ENCODE measurements at regions of chr19 and their contacts with region 1.

Region 1: DNA sequence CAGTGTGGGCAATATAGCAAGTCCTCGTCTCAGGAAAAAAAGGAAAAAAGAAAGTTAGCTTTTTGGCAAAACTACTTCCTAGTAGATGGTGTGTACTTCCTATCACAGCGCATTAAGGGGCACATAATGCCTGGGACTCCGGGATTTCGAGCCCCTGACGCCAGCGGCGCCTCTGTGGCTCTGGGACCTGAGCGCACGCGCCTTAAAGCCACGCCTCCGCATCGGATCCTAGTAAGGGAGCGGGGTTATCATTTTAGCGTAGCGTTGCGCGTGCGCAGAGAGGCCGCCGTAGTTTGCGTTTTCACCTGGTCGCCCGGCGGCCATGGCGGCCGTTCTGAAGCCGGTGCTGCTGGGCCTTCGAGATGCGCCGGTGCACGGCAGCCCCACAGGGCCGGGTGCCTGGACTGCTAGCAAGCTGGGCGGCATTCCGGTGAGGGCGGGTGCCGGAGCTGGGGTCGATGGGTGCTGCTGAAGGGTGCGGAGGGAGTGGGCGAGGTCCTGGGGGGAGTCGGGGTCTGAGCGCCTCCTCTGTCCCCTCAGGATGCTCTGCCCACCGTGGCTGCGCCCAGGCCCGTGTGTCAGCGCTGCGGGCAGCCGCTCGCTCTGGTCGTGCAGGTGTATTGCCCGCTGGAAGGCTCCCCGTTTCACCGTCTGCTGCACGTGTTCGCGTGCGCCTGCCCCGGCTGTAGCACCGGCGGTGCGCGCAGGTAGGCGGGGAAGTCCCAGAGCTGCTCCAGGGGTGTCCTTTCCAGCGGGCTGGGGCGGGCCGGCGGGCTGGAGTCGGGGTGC is at the start of gene PDCD2L:
- DNase-seq: peak; percentile 83 to 91 (median 89)
- ATAC-seq: peak; percentile 97
- H3K4me3 ChIP-seq: peak within 1 kb of the TSS; percentile 97
- H3K4me3 Mint-ChIP-seq: peak within 1 kb of the TSS; percentile 83 to 96 (median 92)
- H3K27ac ChIP-seq: peak within 1 kb of the TSS; percentile 81
- H3K27ac Mint-ChIP-seq: peak within 1 kb of the TSS; percentile 46 to 92 (median 88)
- H3K4me1 ChIP-seq: peaks cover 0 to 4% of the 10 kb centered on the region in 2 donors
- H3K4me1 Mint-ChIP-seq: peaks cover 9 to 42% (median 20%) of the 10 kb centered on the region in 7 donors
- H3K27me3 ChIP-seq: no peaks in the 10 kb centered on the region
- H3K27me3 Mint-ChIP-seq: no peaks in the 10 kb centered on the region
- total RNA-seq, gene PDCD2L: 4.9 to 14.5 (median 12.1) TPM

Region 2: DNA sequence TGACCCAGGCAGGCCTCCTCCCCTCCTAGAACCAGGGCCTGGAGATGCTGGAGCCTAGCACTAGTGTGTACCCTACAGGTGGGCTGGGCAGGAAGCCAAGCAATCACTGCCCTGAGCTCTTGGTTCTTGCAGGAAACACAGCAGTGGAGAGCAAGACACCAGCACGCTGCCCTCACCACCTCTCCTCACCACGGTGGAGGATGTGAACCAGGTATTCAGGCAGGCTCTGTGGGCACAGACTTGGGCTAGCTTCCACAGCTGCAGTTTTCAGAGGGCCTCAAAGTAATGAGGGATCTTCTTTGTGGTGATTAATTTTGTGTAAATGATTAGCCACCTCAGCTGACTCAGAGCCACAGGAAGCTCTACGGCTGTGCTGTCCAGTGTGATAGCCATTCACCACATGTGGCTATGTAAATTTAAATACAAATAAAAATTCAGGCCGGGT is 52.9 kb before region 1 on chr19:
- CTCF ChIA-PET with region 1: no interaction called
- POLR2A ChIA-PET with region 1: interaction called, 5 read pairs
- intact Hi-C with region 1: loop called (anchors 1 kb)
- DNase-seq: peak in 1 of 9 donors; percentile 16
- ATAC-seq: no peak
- H3K4me3 ChIP-seq: no peak overlapping the region
- H3K4me3 Mint-ChIP-seq: peak overlapping the region in 7 of 10 donors; percentile 12 to 75 (median 45)
- H3K27ac ChIP-seq: peak overlapping the region; percentile 43
- H3K27ac Mint-ChIP-seq: peak overlapping the region in 8 of 9 donors; percentile 76 to 91 (median 86)
- H3K4me1 ChIP-seq: peaks cover 18 to 25% of the 10 kb centered on the region in 2 donors
- H3K4me1 Mint-ChIP-seq: peaks cover 13 to 41% (median 26%) of the 10 kb centered on the region in 7 donors
- H3K27me3 ChIP-seq: no peaks in the 10 kb centered on the region
- H3K27me3 Mint-ChIP-seq: no peaks in the 10 kb centered on the region

Region 3: GRCh38 chr19:34359140-34359953 is 45.0 kb before region 1 on chr19:
- CTCF ChIA-PET with region 1: no interaction called
- POLR2A ChIA-PET with region 1: no interaction called
- intact Hi-C with region 1: loop called in 1 of 2 experiments (anchors 1 kb)
- DNase-seq: peak; percentile 77 to 99 (median 89)
- ATAC-seq: peak; percentile 95
- H3K4me3 ChIP-seq: peak overlapping the region; percentile 55
- H3K4me3 Mint-ChIP-seq: peak overlapping the region; percentile 80 to 93 (median 90)
- H3K27ac ChIP-seq: peak overlapping the region; percentile 66
- H3K27ac Mint-ChIP-seq: peak overlapping the region; percentile 87 to 95 (median 94)
- H3K4me1 ChIP-seq: peaks cover 11 to 15% of the 10 kb centered on the region in 2 donors
- H3K4me1 Mint-ChIP-seq: peaks cover 18 to 62% (median 27%) of the 10 kb centered on the region in 7 donors
- H3K27me3 ChIP-seq: no peaks in the 10 kb centered on the region
- H3K27me3 Mint-ChIP-seq: no peaks in the 10 kb centered on the region

Region 4: GRCh38 chr19:34364830-34365462 is 39.4 kb before region 1 on chr19 and contains the start of gene GPI:
- CTCF ChIA-PET with region 1: no interaction called
- POLR2A ChIA-PET with region 1: interaction called, 8 read pairs
- intact Hi-C with region 1: loop called in 1 of 2 experiments (anchors 1 kb)
- DNase-seq: peak; percentile 53 to 82 (median 65)
- ATAC-seq: peak; percentile 94
- H3K4me3 ChIP-seq: peak within 1 kb of the TSS; percentile 90
- H3K4me3 Mint-ChIP-seq: peak within 1 kb of the TSS; percentile 92 to 100 (median 96)
- H3K27ac ChIP-seq: peak within 1 kb of the TSS; percentile 73
- H3K27ac Mint-ChIP-seq: peak within 1 kb of the TSS; percentile 75 to 97 (median 85)
- H3K4me1 ChIP-seq: peaks cover 11 to 24% of the 10 kb centered on the region in 2 donors
- H3K4me1 Mint-ChIP-seq: peaks cover 32 to 70% (median 41%) of the 10 kb centered on the region in 7 donors
- H3K27me3 ChIP-seq: no peaks in the 10 kb centered on the region
- H3K27me3 Mint-ChIP-seq: no peaks in the 10 kb centered on the region
- total RNA-seq, gene GPI: 96.5 to 750 (median 104) TPM

Region 5: GRCh38 chr19:34677386-34678084 is 273.2 kb after region 1 on chr19 and contains the start of gene ZNF302:
- CTCF ChIA-PET with region 1: no interaction called
- POLR2A ChIA-PET with region 1: no interaction called
- intact Hi-C with region 1: no loop called
- DNase-seq: peak; percentile 87 to 96 (median 94)
- ATAC-seq: peak; percentile 95
- H3K4me3 ChIP-seq: peak within 1 kb of the TSS; percentile 93
- H3K4me3 Mint-ChIP-seq: peak within 1 kb of the TSS; percentile 92 to 99 (median 96)
- H3K27ac ChIP-seq: peak within 1 kb of the TSS; percentile 80
- H3K27ac Mint-ChIP-seq: peak within 1 kb of the TSS; percentile 94 to 100 (median 99)
- H3K4me1 ChIP-seq: peaks cover 14 to 15% of the 10 kb centered on the region in 2 donors
- H3K4me1 Mint-ChIP-seq: peaks cover 20 to 56% (median 35%) of the 10 kb centered on the region in 7 donors
- H3K27me3 ChIP-seq: no peaks in the 10 kb centered on the region
- H3K27me3 Mint-ChIP-seq: peaks cover 9 to 18% (median 12%) of the 10 kb centered on the region in 5 donors
- total RNA-seq, gene ZNF302: 13.6 to 61.4 (median 25.7) TPM

Region 6: GRCh38 chr19:34867631-34868030 is 463.3 kb after region 1 on chr19:
- CTCF ChIA-PET with region 1: no interaction called
- POLR2A ChIA-PET with region 1: no interaction called
- intact Hi-C with region 1: no loop called
- DNase-seq: no peak
- ATAC-seq: no peak
- H3K4me3 ChIP-seq: no peak overlapping the region
- H3K4me3 Mint-ChIP-seq: no peak overlapping the region
- H3K27ac ChIP-seq: no peak overlapping the region
- H3K27ac Mint-ChIP-seq: no peak overlapping the region
- H3K4me1 ChIP-seq: no peaks in the 10 kb centered on the region
- H3K4me1 Mint-ChIP-seq: peaks cover 0 to 1% (median 0%) of the 10 kb centered on the region in 7 donors
- H3K27me3 ChIP-seq: no peaks in the 10 kb centered on the region
- H3K27me3 Mint-ChIP-seq: no peaks in the 10 kb centered on the region